ENCODE measurements at regions of chr16 and their contacts with region 1.

Region 1: GRCh38 chr16:20385844-20386832 is 18.4 kb downstream of the PDILT start:
- DNase-seq: peak in 29 of 35 experiments; percentile 4 to 66 (median 25)
- ATAC-seq: peak in 1 of 4 experiments; percentile 40
- H3K4me3 ChIP-seq: no peak overlapping the region
- H3K4me3 Mint-ChIP-seq: no peak overlapping the region
- H3K27ac ChIP-seq: no peak overlapping the region
- H3K27ac Mint-ChIP-seq: no peak overlapping the region
- H3K4me1 ChIP-seq: no peaks in the 10 kb centered on the region
- H3K4me1 Mint-ChIP-seq: peaks cover 0 to 7% (median 2%) of the 10 kb centered on the region in 3 donors
- H3K27me3 ChIP-seq: peaks cover 0 to 13% of the 10 kb centered on the region in 2 experiments
- H3K27me3 Mint-ChIP-seq: peaks cover 15 to 18% of the 10 kb centered on the region in 2 donors

Region 2: GRCh38 chr16:19907161-19907992 is 478.8 kb before region 1 on chr16:
- CTCF ChIA-PET with region 1: interaction called, 6 to 20 read pairs
- POLR2A ChIA-PET with region 1: no interaction called
- DNase-seq: peak; percentile 40 to 80 (median 62)
- ATAC-seq: peak; percentile 95 to 98 (median 97)
- H3K4me3 ChIP-seq: peak overlapping the region in 1 of 2 donors; percentile 17
- H3K4me3 Mint-ChIP-seq: peak overlapping the region; percentile 39 to 55 (median 55)
- H3K27ac ChIP-seq: no peak overlapping the region
- H3K27ac Mint-ChIP-seq: peak overlapping the region in 1 of 2 donors; percentile 44
- H3K4me1 ChIP-seq: peaks cover 0 to 8% of the 10 kb centered on the region in 2 experiments
- H3K4me1 Mint-ChIP-seq: peaks cover 9 to 11% (median 9%) of the 10 kb centered on the region in 3 donors
- H3K27me3 ChIP-seq: peaks cover 0 to 11% of the 10 kb centered on the region in 2 experiments
- H3K27me3 Mint-ChIP-seq: peaks cover 14 to 17% of the 10 kb centered on the region in 2 donors

Region 3: GRCh38 chr16:20192801-20193200 is 193.3 kb before region 1 on chr16:
- CTCF ChIA-PET with region 1: no interaction called
- POLR2A ChIA-PET with region 1: no interaction called
- DNase-seq: no peak
- ATAC-seq: no peak
- H3K4me3 ChIP-seq: no peak overlapping the region
- H3K4me3 Mint-ChIP-seq: no peak overlapping the region
- H3K27ac ChIP-seq: no peak overlapping the region
- H3K27ac Mint-ChIP-seq: no peak overlapping the region
- H3K4me1 ChIP-seq: no peaks in the 10 kb centered on the region
- H3K4me1 Mint-ChIP-seq: no peaks in the 10 kb centered on the region
- H3K27me3 ChIP-seq: no peaks in the 10 kb centered on the region
- H3K27me3 Mint-ChIP-seq: no peaks in the 10 kb centered on the region

Measured in T-cell (primary cell).